GM18951 (cell line): ENCODE measurements at regions of chr6 and their contacts with region 1.

Region 1: GRCh38 chr6:38012573-38012972 is 193.0 kb downstream of the ZFAND3 start:
- POLR2A ChIP-seq: no peak

Region 2: GRCh38 chr6:37705239-37706051 is 307.1 kb before region 1 on chr6:
- in situ Hi-C with region 1: loop called (anchors 25 kb)
- POLR2A ChIP-seq: no peak

Region 3: GRCh38 chr6:37791156-37791919 is 221.2 kb before region 1 on chr6:
- in situ Hi-C with region 1: loop called (anchors 25 kb)
- POLR2A ChIP-seq: no peak

Region 4: DNA sequence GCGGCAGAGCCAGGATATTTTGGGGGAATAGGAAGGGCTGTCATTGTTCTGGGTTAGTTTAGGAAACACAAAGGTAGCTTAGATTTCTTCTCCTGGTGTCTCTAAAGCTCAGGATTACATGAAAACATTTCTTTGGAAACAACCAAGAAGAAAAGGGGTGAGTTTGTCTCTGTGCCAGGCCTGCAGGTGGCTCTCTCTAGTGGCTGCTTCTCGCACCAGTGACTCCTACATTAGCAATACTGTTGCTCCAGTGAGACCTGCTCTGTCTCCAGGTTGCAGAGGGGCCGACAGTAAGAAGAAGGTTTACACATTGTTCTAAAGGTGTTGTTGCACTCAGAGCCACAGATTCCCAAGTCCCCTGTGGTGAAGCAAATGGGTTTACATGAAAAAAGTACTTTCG is 931.4 kb after region 1 on chr6:
- in situ Hi-C with region 1: no loop called
- POLR2A ChIP-seq: no peak